Activated B cell treated with CpG ODN at 0.5 μM for 24 hours (primary cell): ENCODE measurements at regions of chrX and their contacts with region 1.

Region 1: GRCh38 chrX:20442597-20442996 is 175.9 kb upstream of the RPS6KA3 start:
- DNase-seq: peak; percentile 61
- ATAC-seq: peak; percentile 80
- H3K4me3 Mint-ChIP-seq: no peak overlapping the region
- H3K27ac Mint-ChIP-seq: no peak overlapping the region
- H3K4me1 Mint-ChIP-seq: no peaks in the 10 kb centered on the region
- H3K27me3 Mint-ChIP-seq: no peaks in the 10 kb centered on the region
- CTCF ChIP-seq: no peak

Region 2: GRCh38 chrX:20171887-20172286 is 270.7 kb before region 1 on chrX:
- CTCF ChIA-PET with region 1: no interaction called
- POLR2A ChIA-PET with region 1: no interaction called
- intact Hi-C with region 1: loop called (anchors 10 kb)
- DNase-seq: no peak
- ATAC-seq: no peak
- H3K4me3 Mint-ChIP-seq: no peak overlapping the region
- H3K27ac Mint-ChIP-seq: no peak overlapping the region
- H3K4me1 Mint-ChIP-seq: no peaks in the 10 kb centered on the region
- H3K27me3 Mint-ChIP-seq: no peaks in the 10 kb centered on the region
- CTCF ChIP-seq: no peak

Region 3: GRCh38 chrX:20224814-20225487 is 217.6 kb before region 1 on chrX:
- CTCF ChIA-PET with region 1: no interaction called
- POLR2A ChIA-PET with region 1: no interaction called
- intact Hi-C with region 1: loop called (anchors 1 kb)
- DNase-seq: no peak
- ATAC-seq: peak; percentile 72
- H3K4me3 Mint-ChIP-seq: no peak overlapping the region
- H3K27ac Mint-ChIP-seq: peak overlapping the region; percentile 12
- H3K4me1 Mint-ChIP-seq: peaks cover 24% of the 10 kb centered on the region
- H3K27me3 Mint-ChIP-seq: no peaks in the 10 kb centered on the region
- CTCF ChIP-seq: no peak

Region 4: DNA sequence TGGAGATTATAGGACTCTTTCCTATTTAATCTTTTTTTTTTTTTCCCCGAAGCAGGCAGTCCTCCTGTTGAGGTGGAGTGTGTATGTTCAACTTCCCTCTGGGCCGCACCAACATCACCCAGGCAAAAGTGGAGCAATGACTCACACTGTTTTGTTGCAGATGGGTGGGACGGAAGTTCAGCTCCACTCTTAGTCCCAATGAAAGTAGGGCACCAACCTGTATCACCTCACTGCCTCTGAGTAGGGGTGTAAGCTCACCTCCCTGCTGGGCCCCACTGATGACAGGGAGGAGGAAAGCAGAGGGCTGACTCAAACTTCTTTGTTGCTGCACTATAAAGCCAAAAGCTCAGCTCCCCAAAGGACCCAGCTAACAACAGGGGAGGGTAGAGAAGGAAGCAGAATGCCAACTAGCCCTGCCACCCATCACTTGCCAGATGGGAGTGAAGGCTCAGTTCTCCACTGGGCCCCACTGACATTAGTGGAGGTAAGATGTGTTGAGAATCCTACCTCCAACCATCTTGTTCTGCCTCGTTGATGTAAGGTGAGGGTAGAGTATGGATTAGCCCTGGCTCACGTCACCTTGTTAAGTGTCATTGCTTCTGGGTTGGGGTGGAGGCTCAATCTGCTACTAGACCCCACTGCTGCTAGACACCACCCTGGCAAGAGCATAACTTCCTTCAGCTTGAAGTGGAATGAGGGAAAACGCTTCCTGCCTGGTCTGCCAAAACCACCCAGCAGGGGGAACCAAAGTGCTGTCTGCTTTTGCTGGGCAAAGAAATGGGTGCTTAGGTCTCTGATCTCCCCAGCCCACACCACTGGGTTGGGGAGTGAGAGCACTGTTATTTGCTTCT is 190.0 kb before region 1 on chrX:
- CTCF ChIA-PET with region 1: interaction called, 5 read pairs
- POLR2A ChIA-PET with region 1: no interaction called
- intact Hi-C with region 1: loop called (anchors 1 kb)
- DNase-seq: peak; percentile 42
- ATAC-seq: peak; percentile 75
- H3K4me3 Mint-ChIP-seq: no peak overlapping the region
- H3K27ac Mint-ChIP-seq: no peak overlapping the region
- H3K4me1 Mint-ChIP-seq: peaks cover 45% of the 10 kb centered on the region
- H3K27me3 Mint-ChIP-seq: no peaks in the 10 kb centered on the region
- CTCF ChIP-seq: no peak

Region 5: GRCh38 chrX:20329435-20329834 is 113.2 kb before region 1 on chrX:
- CTCF ChIA-PET with region 1: no interaction called
- POLR2A ChIA-PET with region 1: no interaction called
- intact Hi-C with region 1: loop called (anchors 2 kb)
- DNase-seq: no peak
- ATAC-seq: no peak
- H3K4me3 Mint-ChIP-seq: no peak overlapping the region
- H3K27ac Mint-ChIP-seq: no peak overlapping the region
- H3K4me1 Mint-ChIP-seq: no peaks in the 10 kb centered on the region
- H3K27me3 Mint-ChIP-seq: no peaks in the 10 kb centered on the region
- CTCF ChIP-seq: no peak

Region 6: DNA sequence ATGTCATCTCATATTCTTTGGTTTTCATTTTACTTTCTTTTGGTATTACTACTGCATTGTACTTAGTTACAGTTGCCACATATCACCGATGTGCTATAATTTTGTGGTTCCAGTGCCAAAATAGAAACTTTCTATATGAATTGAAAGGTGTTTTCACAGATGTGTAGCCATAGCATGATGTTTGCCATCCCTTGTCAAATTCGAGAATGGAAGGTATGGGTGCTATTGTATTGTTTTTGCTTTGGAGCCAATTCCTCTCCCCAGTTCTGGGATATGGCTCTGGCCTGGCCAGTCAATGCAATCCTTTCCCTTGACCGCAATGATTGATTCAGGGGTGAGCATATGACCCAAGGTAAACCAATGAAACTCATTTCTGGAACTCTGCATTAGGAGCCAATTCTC is 89.7 kb before region 1 on chrX:
- CTCF ChIA-PET with region 1: no interaction called
- POLR2A ChIA-PET with region 1: no interaction called
- intact Hi-C with region 1: no loop called
- DNase-seq: no peak
- ATAC-seq: no peak
- H3K4me3 Mint-ChIP-seq: no peak overlapping the region
- H3K27ac Mint-ChIP-seq: no peak overlapping the region
- H3K4me1 Mint-ChIP-seq: no peaks in the 10 kb centered on the region
- H3K27me3 Mint-ChIP-seq: no peaks in the 10 kb centered on the region
- CTCF ChIP-seq: no peak

Region 7: DNA sequence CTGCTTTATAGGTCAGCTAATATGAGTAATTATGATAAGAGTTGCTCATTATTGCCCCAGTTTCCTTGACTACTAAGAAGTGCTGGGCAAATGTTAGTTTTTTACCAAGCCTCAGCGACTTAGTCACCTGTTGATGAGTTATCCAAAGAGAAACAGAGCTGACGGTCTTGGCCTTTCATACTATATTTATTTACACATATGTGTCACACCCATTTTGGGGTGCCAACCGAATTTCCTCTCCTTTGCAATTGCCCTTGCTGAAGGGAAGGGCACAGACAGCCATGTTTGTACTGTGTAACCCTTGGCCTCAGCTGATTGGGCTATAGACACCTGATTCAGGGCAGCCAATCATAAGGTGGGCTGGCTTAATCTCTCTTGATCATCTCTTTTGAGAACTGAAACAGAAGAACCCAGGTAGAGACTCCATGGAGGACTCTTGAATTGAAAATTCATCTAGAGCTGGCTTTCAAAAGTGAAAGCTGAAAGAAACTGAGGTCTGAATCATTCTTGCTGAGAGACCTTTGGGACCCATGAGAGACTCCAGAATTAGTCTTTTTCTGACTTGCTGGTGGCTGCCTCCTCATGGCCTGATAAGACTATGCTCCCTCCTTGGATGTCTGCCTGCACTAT is 64.2 kb before region 1 on chrX:
- CTCF ChIA-PET with region 1: no interaction called
- POLR2A ChIA-PET with region 1: no interaction called
- intact Hi-C with region 1: loop called (anchors 1 kb)
- DNase-seq: no peak
- ATAC-seq: peak; percentile 28
- H3K4me3 Mint-ChIP-seq: no peak overlapping the region
- H3K27ac Mint-ChIP-seq: no peak overlapping the region
- H3K4me1 Mint-ChIP-seq: peaks cover 26% of the 10 kb centered on the region
- H3K27me3 Mint-ChIP-seq: no peaks in the 10 kb centered on the region
- CTCF ChIP-seq: no peak

Region 8: DNA sequence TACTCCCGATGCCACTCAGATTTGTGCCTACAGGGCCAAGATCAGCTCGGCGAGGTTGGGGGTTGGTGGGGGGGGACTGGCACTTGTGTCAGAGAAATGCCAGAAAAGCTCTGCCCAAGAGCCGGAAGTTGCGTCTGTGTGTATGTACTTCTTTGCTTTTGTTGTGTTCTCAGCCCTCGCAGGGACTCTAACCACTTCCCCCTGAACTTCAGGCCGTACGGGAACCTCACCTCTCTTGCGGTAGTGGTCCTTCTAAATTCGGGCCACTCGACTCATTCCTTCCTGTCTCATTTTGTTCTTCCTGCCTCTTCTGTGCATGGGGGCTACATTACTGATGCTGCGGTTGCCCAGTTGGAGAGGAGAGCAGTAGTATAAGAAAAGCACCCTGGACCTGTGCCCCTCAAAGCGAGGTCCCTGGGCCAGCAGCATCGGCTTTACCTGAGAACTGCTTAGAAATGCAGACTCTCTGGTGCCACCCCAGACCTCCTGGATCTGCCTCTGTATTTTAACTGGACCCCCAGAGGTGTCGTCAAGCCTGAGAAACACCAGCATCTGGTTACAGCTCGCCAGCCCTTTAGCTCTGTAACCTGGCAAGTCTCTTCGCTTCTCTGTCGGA is 29.6 kb before region 1 on chrX:
- CTCF ChIA-PET with region 1: no interaction called
- POLR2A ChIA-PET with region 1: no interaction called
- intact Hi-C with region 1: no loop called
- DNase-seq: peak; percentile 16
- ATAC-seq: peak; percentile 71
- H3K4me3 Mint-ChIP-seq: peak overlapping the region; percentile 69
- H3K27ac Mint-ChIP-seq: peak overlapping the region; percentile 83
- H3K4me1 Mint-ChIP-seq: peaks cover 23% of the 10 kb centered on the region
- H3K27me3 Mint-ChIP-seq: no peaks in the 10 kb centered on the region
- CTCF ChIP-seq: no peak

Region 9: GRCh38 chrX:22122510-22122909 is 1679.9 kb after region 1 on chrX:
- CTCF ChIA-PET with region 1: no interaction called
- POLR2A ChIA-PET with region 1: no interaction called
- intact Hi-C with region 1: no loop called
- DNase-seq: no peak
- ATAC-seq: no peak
- H3K4me3 Mint-ChIP-seq: no peak overlapping the region
- H3K27ac Mint-ChIP-seq: no peak overlapping the region
- H3K4me1 Mint-ChIP-seq: no peaks in the 10 kb centered on the region
- H3K27me3 Mint-ChIP-seq: no peaks in the 10 kb centered on the region
- CTCF ChIP-seq: no peak